ENCODE measurements at regions of chr12 and their contacts with region 1.

Region 1: GRCh38 chr12:121560392-121561008 is 20.3 kb downstream of the KDM2B start:
- DNase-seq: peak in 1 of 2 donors; percentile 25
- ATAC-seq: no peak
- H3K4me3 ChIP-seq: no peak overlapping the region
- H3K4me3 Mint-ChIP-seq: no peak overlapping the region
- H3K27ac ChIP-seq: no peak overlapping the region
- H3K27ac Mint-ChIP-seq: peak overlapping the region; percentile 80 to 96
- H3K4me1 ChIP-seq: peaks cover 34% of the 10 kb centered on the region
- H3K4me1 Mint-ChIP-seq: peaks cover 10 to 25% of the 10 kb centered on the region in 2 donors
- H3K27me3 ChIP-seq: no peaks in the 10 kb centered on the region
- H3K27me3 Mint-ChIP-seq: no peaks in the 10 kb centered on the region
- CTCF ChIP-seq: no peak

Region 2: DNA sequence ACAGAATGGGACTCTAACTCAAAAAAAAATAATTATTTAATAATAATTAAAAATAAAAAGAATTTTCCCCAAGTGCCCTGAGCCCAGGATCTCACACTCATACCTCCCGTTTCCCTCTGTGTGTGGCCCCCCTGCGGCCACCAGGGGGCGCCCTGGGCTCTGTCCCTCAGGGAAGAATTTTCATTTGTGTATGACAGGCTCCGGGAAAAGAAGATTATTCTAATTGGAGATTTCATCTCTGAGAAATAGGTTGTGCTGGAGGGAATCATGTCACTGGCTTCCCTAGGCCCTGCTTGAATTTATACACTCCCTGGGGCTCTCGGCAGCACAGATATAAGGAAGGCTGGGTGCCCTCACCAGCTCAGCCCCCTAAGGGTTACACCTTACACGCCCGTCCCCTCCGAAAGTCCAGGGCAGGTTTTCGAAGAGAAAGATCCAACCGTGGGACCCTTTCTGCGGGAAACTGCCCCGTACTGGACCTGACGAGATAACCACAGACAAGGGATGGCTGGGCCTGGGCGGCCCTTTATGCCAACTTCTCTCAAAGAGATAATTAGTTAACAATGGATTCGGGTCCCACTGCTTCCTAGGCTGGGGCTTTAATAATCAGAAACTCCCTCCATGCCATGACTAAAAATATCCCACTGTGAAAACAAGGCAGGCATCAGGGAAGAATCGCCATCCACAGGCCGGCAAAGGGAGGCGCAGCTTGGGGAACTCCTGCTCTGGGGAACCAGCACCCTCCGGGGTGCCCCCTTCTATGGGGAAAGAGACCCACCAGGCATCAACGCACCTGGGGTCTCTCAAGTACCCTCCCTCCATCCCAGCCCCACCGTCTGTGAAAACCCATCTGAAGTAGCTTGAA is 60.3 kb before region 1 on chr12:
- intact Hi-C with region 1: loop called (anchors 5 kb)
- DNase-seq: peak; percentile 76 to 87
- ATAC-seq: peak; percentile 74 to 78 (median 75)
- H3K4me3 ChIP-seq: no peak overlapping the region
- H3K4me3 Mint-ChIP-seq: no peak overlapping the region
- H3K27ac ChIP-seq: no peak overlapping the region
- H3K27ac Mint-ChIP-seq: peak overlapping the region in 1 of 2 donors; percentile 59
- H3K4me1 ChIP-seq: peaks cover 57% of the 10 kb centered on the region
- H3K4me1 Mint-ChIP-seq: peaks cover 17 to 36% of the 10 kb centered on the region in 2 donors
- H3K27me3 ChIP-seq: no peaks in the 10 kb centered on the region
- H3K27me3 Mint-ChIP-seq: no peaks in the 10 kb centered on the region
- CTCF ChIP-seq: peak; percentile 98

Region 3: GRCh38 chr12:121536899-121537813 is 23.3 kb before region 1 on chr12:
- intact Hi-C with region 1: loop called (anchors 1 kb)
- DNase-seq: peak; percentile 68 to 78
- ATAC-seq: peak; percentile 54 to 85 (median 74)
- H3K4me3 ChIP-seq: peak overlapping the region; percentile 53
- H3K4me3 Mint-ChIP-seq: peak overlapping the region; percentile 82
- H3K27ac ChIP-seq: peak overlapping the region; percentile 95
- H3K27ac Mint-ChIP-seq: peak overlapping the region; percentile 82 to 83
- H3K4me1 ChIP-seq: peaks cover 48% of the 10 kb centered on the region
- H3K4me1 Mint-ChIP-seq: peaks cover 32 to 45% of the 10 kb centered on the region in 2 donors
- H3K27me3 ChIP-seq: no peaks in the 10 kb centered on the region
- H3K27me3 Mint-ChIP-seq: no peaks in the 10 kb centered on the region
- CTCF ChIP-seq: no peak

Region 4: GRCh38 chr12:121579981-121580868 is 19.7 kb after region 1 on chr12:
- intact Hi-C with region 1: loop called (anchors 1 kb)
- DNase-seq: peak; percentile 66 to 87
- ATAC-seq: peak; percentile 57 to 78 (median 72)
- H3K4me3 ChIP-seq: peak overlapping the region; percentile 65
- H3K4me3 Mint-ChIP-seq: peak overlapping the region; percentile 99
- H3K27ac ChIP-seq: peak overlapping the region; percentile 92
- H3K27ac Mint-ChIP-seq: peak overlapping the region; percentile 93 to 98
- H3K4me1 ChIP-seq: peaks cover 44% of the 10 kb centered on the region
- H3K4me1 Mint-ChIP-seq: peaks cover 33 to 45% of the 10 kb centered on the region in 2 donors
- H3K27me3 ChIP-seq: no peaks in the 10 kb centered on the region
- H3K27me3 Mint-ChIP-seq: no peaks in the 10 kb centered on the region
- CTCF ChIP-seq: no peak

Region 5: GRCh38 chr12:121590476-121591143 is 30.1 kb after region 1 on chr12:
- intact Hi-C with region 1: loop called (anchors 1 kb)
- DNase-seq: peak; percentile 63 to 89
- ATAC-seq: peak; percentile 74 to 84 (median 78)
- H3K4me3 ChIP-seq: peak overlapping the region; percentile 37
- H3K4me3 Mint-ChIP-seq: peak overlapping the region; percentile 89
- H3K27ac ChIP-seq: peak overlapping the region; percentile 98
- H3K27ac Mint-ChIP-seq: peak overlapping the region; percentile 95 to 99
- H3K4me1 ChIP-seq: peaks cover 39% of the 10 kb centered on the region
- H3K4me1 Mint-ChIP-seq: peaks cover 32 to 37% of the 10 kb centered on the region in 2 donors
- H3K27me3 ChIP-seq: no peaks in the 10 kb centered on the region
- H3K27me3 Mint-ChIP-seq: no peaks in the 10 kb centered on the region
- CTCF ChIP-seq: no peak

Region 6: GRCh38 chr12:121668750-121669520 is 108.4 kb after region 1 on chr12:
- intact Hi-C with region 1: loop called (anchors 1 kb)
- DNase-seq: peak; percentile 47 to 79
- ATAC-seq: no peak
- H3K4me3 ChIP-seq: no peak overlapping the region
- H3K4me3 Mint-ChIP-seq: no peak overlapping the region
- H3K27ac ChIP-seq: no peak overlapping the region
- H3K27ac Mint-ChIP-seq: peak overlapping the region in 1 of 2 donors; percentile 79
- H3K4me1 ChIP-seq: peaks cover 51% of the 10 kb centered on the region
- H3K4me1 Mint-ChIP-seq: peaks cover 27 to 57% of the 10 kb centered on the region in 2 donors
- H3K27me3 ChIP-seq: no peaks in the 10 kb centered on the region
- H3K27me3 Mint-ChIP-seq: no peaks in the 10 kb centered on the region
- CTCF ChIP-seq: peak; percentile 68